Activated CD4-positive, alpha-beta T cell treated with anti-CD3 and anti-CD28 coated beads for 36 hours (primary cell): ENCODE measurements at regions of chr17 and their contacts with region 1.

Region 1: GRCh38 chr17:48335858-48336500 is 94.0 kb downstream of the SKAP1 start:
- DNase-seq: no peak
- ATAC-seq: peak; percentile 51
- H3K4me3 Mint-ChIP-seq: no peak overlapping the region
- H3K27ac Mint-ChIP-seq: no peak overlapping the region
- H3K4me1 Mint-ChIP-seq: peaks cover 11% of the 10 kb centered on the region
- H3K27me3 Mint-ChIP-seq: no peaks in the 10 kb centered on the region

Region 2: GRCh38 chr17:48307814-48308411 is 28.1 kb before region 1 on chr17:
- CTCF ChIA-PET with region 1: interaction called, 29 read pairs
- POLR2A ChIA-PET with region 1: no interaction called
- intact Hi-C with region 1: no loop called
- DNase-seq: peak; percentile 69
- ATAC-seq: peak; percentile 75
- H3K4me3 Mint-ChIP-seq: no peak overlapping the region
- H3K27ac Mint-ChIP-seq: no peak overlapping the region
- H3K4me1 Mint-ChIP-seq: peaks cover 15% of the 10 kb centered on the region
- H3K27me3 Mint-ChIP-seq: no peaks in the 10 kb centered on the region

Region 3: GRCh38 chr17:48351831-48352332 is 15.9 kb after region 1 on chr17:
- CTCF ChIA-PET with region 1: interaction called, 113 read pairs
- POLR2A ChIA-PET with region 1: no interaction called
- intact Hi-C with region 1: no loop called
- DNase-seq: no peak
- ATAC-seq: no peak
- H3K4me3 Mint-ChIP-seq: no peak overlapping the region
- H3K27ac Mint-ChIP-seq: no peak overlapping the region
- H3K4me1 Mint-ChIP-seq: peaks cover 11% of the 10 kb centered on the region
- H3K27me3 Mint-ChIP-seq: no peaks in the 10 kb centered on the region

Region 4: DNA sequence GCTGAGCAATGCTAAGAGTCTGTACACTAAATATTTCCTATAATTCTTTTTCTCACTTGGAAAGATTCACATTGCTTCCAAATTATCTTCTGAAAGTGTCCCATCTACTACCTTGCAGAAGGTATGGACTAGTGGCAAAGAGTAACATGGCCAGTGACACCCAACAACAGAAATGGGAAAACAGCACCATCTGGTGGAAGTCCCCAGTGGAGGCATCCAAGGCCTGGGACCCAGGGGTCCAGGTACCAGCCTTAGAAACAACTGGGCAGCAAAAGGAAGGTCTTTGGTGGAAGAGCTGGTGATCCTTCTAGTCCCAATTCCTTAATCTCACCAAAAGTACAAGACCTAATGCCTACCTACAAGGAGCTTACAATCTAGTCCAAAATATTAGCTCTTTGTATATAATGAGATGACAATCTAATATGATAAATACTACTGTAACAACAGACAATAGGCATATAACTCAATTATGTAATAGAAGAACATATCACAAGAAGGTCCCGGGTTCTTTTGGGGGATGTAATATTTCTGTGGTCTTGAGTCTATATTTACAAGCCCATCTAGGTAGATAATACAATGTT is 38.8 kb after region 1 on chr17:
- CTCF ChIA-PET with region 1: interaction called, 11 read pairs
- POLR2A ChIA-PET with region 1: no interaction called
- intact Hi-C with region 1: no loop called
- DNase-seq: peak; percentile 42
- ATAC-seq: peak; percentile 61
- H3K4me3 Mint-ChIP-seq: no peak overlapping the region
- H3K27ac Mint-ChIP-seq: no peak overlapping the region
- H3K4me1 Mint-ChIP-seq: peaks cover 29% of the 10 kb centered on the region
- H3K27me3 Mint-ChIP-seq: no peaks in the 10 kb centered on the region